ENCODE measurements at regions of chrX and their contacts with region 1.

Region 1: GRCh38 chrX:69844636-69845035 is 205.1 kb downstream of the AWAT2 start:
- DNase-seq: no peak
- ATAC-seq: no peak
- H3K4me3 ChIP-seq: no peak overlapping the region
- H3K27ac ChIP-seq: no peak overlapping the region
- H3K4me1 ChIP-seq: no peaks in the 10 kb centered on the region
- H3K27me3 ChIP-seq: no peaks in the 10 kb centered on the region
- CTCF ChIP-seq: no peak

Region 2: GRCh38 chrX:69538321-69538876 is 306.2 kb before region 1 on chrX:
- intact Hi-C with region 1: no loop called
- DNase-seq: peak; percentile 70 to 83
- ATAC-seq: peak; percentile 95 to 99 (median 96)
- H3K4me3 ChIP-seq: peak overlapping the region in 9 of 10 donors; percentile 27 to 59 (median 54)
- H3K27ac ChIP-seq: peak overlapping the region in 4 of 10 donors; percentile 52 to 71 (median 54)
- H3K4me1 ChIP-seq: peaks cover 0 to 17% (median 3%) of the 10 kb centered on the region in 9 donors
- H3K27me3 ChIP-seq: peaks cover 0 to 34% (median 0%) of the 10 kb centered on the region in 7 donors
- CTCF ChIP-seq: peak; percentile 60 to 83 (median 77)

Region 3: GRCh38 chrX:69808375-69808774 is 36.3 kb before region 1 on chrX:
- intact Hi-C with region 1: loop called in 1 of 10 experiments (anchors 1 kb)
- DNase-seq: no peak
- ATAC-seq: no peak
- H3K4me3 ChIP-seq: no peak overlapping the region
- H3K27ac ChIP-seq: no peak overlapping the region
- H3K4me1 ChIP-seq: no peaks in the 10 kb centered on the region
- H3K27me3 ChIP-seq: peaks cover 0 to 11% (median 0%) of the 10 kb centered on the region in 7 donors
- CTCF ChIP-seq: no peak

Region 4: DNA sequence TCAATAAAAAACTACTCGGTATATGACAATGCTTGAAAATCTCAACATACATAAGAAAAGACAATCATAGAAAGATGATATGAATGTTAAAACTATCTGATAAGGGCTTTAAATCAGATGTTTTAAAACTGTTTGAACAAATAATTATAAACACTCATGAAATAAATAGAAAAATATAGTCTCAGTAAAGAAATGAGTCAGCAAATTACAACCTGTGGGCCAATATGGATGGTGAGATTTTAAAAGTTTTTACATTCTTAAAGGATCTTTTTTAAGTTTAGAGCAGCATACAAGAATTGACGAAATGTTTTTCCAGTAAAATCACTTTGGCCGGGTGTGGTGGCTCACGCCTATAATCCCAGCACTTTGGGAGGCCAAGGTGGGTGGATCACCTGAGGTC is 980.7 kb after region 1 on chrX:
- intact Hi-C with region 1: no loop called
- DNase-seq: no peak
- ATAC-seq: no peak
- H3K4me3 ChIP-seq: no peak overlapping the region
- H3K27ac ChIP-seq: no peak overlapping the region
- H3K4me1 ChIP-seq: no peaks in the 10 kb centered on the region
- H3K27me3 ChIP-seq: peaks cover 0 to 30% (median 0%) of the 10 kb centered on the region in 7 donors
- CTCF ChIP-seq: no peak

Measured in heart right ventricle (tissue), 16 donors.